ENCODE measurements at regions of chr11 and their contacts with region 1.

Region 1: GRCh38 chr11:3037040-3037944 is 19.9 kb downstream of the CARS1 start:
- H3K4me3 Mint-ChIP-seq: peak overlapping the region; percentile 33
- H3K27ac Mint-ChIP-seq: peak overlapping the region; percentile 88
- H3K4me1 Mint-ChIP-seq: peaks cover 48% of the 10 kb centered on the region
- H3K27me3 Mint-ChIP-seq: no peaks in the 10 kb centered on the region

Region 2: GRCh38 chr11:2987881-2988861 is 49.1 kb before region 1 on chr11:
- intact Hi-C with region 1: loop called (anchors 10 kb)
- H3K4me3 Mint-ChIP-seq: peak overlapping the region; percentile 20
- H3K27ac Mint-ChIP-seq: peak overlapping the region; percentile 12
- H3K4me1 Mint-ChIP-seq: peaks cover 48% of the 10 kb centered on the region
- H3K27me3 Mint-ChIP-seq: no peaks in the 10 kb centered on the region

Region 3: GRCh38 chr11:3057069-3057963 is 20.0 kb after region 1 on chr11 and contains the start of gene CARS1:
- intact Hi-C with region 1: loop called (anchors 2 kb)
- H3K4me3 Mint-ChIP-seq: peak within 1 kb of the TSS; percentile 84
- H3K27ac Mint-ChIP-seq: peak within 1 kb of the TSS; percentile 91
- H3K4me1 Mint-ChIP-seq: peaks cover 46% of the 10 kb centered on the region
- H3K27me3 Mint-ChIP-seq: peaks cover 6% of the 10 kb centered on the region

Region 4: GRCh38 chr11:3091791-3092602 is 54.7 kb after region 1 on chr11:
- intact Hi-C with region 1: loop called (anchors 1 kb)
- H3K4me3 Mint-ChIP-seq: no peak overlapping the region
- H3K27ac Mint-ChIP-seq: no peak overlapping the region
- H3K4me1 Mint-ChIP-seq: peaks cover 18% of the 10 kb centered on the region
- H3K27me3 Mint-ChIP-seq: no peaks in the 10 kb centered on the region

Region 5: GRCh38 chr11:3217676-3218482 is 180.6 kb after region 1 on chr11:
- intact Hi-C with region 1: loop called (anchors 1 kb)
- H3K4me3 Mint-ChIP-seq: no peak overlapping the region
- H3K27ac Mint-ChIP-seq: peak overlapping the region; percentile 47
- H3K4me1 Mint-ChIP-seq: peaks cover 46% of the 10 kb centered on the region
- H3K27me3 Mint-ChIP-seq: peaks cover 78% of the 10 kb centered on the region

Region 6: GRCh38 chr11:3231855-3232744 is 194.8 kb after region 1 on chr11 and contains the start of gene MRGPRE:
- intact Hi-C with region 1: no loop called
- H3K4me3 Mint-ChIP-seq: no peak within 1 kb of the TSS
- H3K27ac Mint-ChIP-seq: peak within 1 kb of the TSS; percentile 25
- H3K4me1 Mint-ChIP-seq: peaks cover 11% of the 10 kb centered on the region
- H3K27me3 Mint-ChIP-seq: peaks cover 69% of the 10 kb centered on the region